ENCODE measurements at regions of chrX and their contacts with region 1.

Region 1: GRCh38 chrX:71178908-71179307 is 34.3 kb downstream of the NLGN3 start:
- DNase-seq: peak; percentile 38
- ATAC-seq: peak; percentile 39

Region 2: DNA sequence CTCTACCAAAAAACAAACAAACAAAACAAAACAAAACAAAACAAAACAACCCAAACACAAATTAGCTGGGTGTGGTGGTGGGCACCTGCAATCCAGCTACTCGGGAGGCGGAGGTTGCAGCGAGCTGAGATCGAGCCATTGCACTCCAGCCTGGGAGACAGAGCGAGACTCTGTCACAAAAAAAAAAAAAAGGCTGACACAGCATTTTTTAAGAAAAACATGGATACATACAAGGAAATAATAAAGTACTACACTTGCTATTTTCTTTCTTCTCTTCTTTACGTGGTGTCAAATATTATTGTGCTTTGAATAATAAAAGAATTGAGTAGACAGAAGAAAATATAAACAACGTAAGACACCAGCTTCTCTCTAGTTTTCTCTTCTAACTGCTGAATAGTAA is 344.3 kb before region 1 on chrX:
- intact Hi-C with region 1: no loop called
- DNase-seq: no peak
- ATAC-seq: no peak

Region 3: DNA sequence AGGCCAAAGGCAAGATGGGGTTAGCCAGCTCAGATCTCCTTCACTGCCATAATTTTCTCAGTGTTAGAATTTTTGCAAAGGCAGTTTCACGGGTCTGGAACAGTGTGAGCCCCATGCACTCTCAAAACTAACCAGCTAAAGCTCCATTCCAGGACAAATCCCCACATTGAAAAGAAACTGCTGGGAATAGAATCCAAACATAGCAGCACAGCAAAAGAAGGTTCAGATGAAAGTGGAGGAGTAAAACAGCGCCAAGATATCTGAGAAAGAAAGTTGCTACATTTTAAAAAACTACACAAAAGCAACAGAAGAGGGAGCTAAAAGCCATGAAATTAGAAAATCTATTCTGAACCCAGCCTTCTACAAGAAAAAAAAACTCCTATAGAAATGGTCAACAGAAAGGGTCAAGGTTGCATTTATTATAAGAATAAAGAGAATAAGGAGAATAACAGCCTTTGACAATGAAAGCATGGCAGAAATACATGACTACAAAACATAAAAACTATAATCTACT is 208.4 kb before region 1 on chrX:
- intact Hi-C with region 1: loop called (anchors 10 kb)
- DNase-seq: no peak
- ATAC-seq: no peak

Region 4: DNA sequence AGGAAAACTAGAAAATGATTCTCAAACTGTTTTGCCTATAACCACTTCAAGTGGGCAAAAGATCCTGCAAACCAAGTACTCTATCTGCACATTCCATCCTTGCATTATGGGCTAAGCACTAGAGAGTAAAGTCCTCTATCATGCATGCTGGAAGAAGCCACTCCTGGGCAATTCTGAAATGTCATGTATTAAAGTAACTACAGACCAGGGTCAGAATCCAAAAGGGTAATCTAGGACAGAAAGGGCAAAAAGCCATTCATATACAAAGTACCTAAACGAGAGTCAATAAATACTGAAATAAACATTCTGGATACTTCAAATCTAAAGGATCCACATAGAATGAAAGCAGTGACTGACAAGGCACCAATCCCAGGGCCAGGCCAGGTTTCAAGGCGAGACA is 111.8 kb before region 1 on chrX:
- intact Hi-C with region 1: no loop called
- DNase-seq: no peak
- ATAC-seq: no peak

Region 5: DNA sequence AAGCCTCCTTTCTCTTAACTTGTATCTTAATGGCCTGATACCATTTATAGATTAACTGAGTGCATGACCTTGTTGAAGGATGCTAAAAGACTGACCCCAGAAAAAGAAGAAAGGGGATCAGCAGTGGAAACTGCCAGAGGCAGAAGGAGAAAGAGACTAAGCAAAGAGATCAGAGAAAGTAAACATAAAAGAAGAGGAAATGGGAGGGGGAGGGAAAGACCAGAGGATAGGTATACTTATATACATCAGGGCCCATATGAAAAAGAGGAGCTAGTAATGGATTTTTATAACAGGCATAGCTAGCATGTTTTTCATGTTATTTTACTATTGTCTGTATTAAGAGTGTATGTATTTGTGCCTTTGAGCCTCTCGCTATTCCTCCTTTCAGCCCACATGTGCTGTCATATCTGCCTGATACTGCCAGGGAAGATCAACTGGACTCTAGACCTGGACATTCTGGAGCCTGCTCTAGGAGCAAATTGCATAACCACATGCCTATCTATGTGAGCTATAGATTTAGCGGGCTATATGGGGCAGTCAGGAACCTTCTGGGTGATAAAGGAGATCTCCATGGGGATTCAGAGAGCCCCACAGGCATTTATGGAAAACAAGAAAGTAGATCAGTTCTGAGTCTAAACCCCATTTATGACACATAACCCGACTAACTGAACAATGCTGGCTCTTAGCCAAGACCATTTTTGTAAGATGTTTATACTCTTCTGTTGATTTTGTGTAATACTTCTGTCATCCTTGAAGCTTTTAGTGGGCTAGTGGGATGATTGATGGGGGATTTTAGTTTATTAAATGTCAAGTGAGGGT is 97.4 kb before region 1 on chrX:
- intact Hi-C with region 1: no loop called
- DNase-seq: no peak
- ATAC-seq: no peak